ENCODE measurements at regions of chr3 and their contacts with region 1.

Region 1: DNA sequence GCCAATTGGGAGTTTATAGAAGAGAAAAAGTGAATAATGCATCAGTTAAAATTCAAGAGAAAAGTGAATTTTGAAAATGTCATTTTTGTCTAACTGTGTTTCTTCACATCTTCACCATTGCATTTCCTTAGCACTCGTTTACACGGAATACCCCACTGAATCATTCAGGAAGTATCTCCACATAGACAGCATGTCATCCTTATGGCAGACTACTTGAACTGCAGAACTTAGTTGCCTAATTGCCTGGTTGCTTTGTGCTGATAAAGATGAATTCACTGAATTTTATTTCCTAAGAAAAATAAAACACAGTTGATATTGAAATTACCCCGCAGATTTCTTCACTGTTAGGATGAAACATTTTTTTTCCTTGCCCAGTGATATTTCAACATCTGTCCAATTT is 627.1 kb downstream of the ROBO1 start:
- DNase-seq: no peak
- ATAC-seq: no peak
- H3K4me3 ChIP-seq: no peak overlapping the region
- H3K27ac ChIP-seq: no peak overlapping the region
- H3K4me1 ChIP-seq: no peaks in the 10 kb centered on the region
- H3K27me3 ChIP-seq: no peaks in the 10 kb centered on the region
- CTCF ChIP-seq: no peak
- EP300 ChIP-seq: no peak
- POLR2A ChIP-seq: no peak
- RAD21 ChIP-seq: no peak

Region 2: DNA sequence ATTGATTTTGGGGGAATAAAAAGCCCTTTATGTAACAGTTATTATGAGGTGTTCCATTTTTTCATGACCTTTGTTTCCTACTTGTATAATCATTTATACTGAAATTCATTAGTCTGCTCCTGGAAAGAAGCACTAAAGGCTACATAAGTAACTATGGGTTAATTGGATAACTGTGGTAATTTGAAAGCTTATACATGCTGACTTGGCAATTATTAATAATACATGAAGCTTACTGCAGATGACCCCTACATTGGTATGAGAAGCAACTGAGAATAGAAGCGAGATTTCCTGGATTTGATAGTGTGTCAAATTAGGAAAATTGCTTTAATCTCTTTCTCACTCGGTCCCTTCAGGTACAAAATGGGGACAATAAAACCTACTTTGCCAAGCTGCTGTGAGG is 31.0 kb before region 1 on chr3:
- CTCF ChIA-PET with region 1: no interaction called
- POLR2A ChIA-PET with region 1: no interaction called
- RAD21 ChIA-PET with region 1: no interaction called
- SMC1A ChIA-PET with region 1: no interaction called
- in situ Hi-C with region 1: no loop called
- intact Hi-C with region 1: loop called (anchors 1 kb)
- DNase-seq: no peak
- ATAC-seq: no peak
- H3K4me3 ChIP-seq: no peak overlapping the region
- H3K27ac ChIP-seq: no peak overlapping the region
- H3K4me1 ChIP-seq: no peaks in the 10 kb centered on the region
- H3K27me3 ChIP-seq: no peaks in the 10 kb centered on the region
- CTCF ChIP-seq: no peak
- EP300 ChIP-seq: no peak
- POLR2A ChIP-seq: no peak
- RAD21 ChIP-seq: no peak

Measured in GM12878 (cell line).